ENCODE measurements at regions of chr17 and their contacts with region 1.

Region 1: DNA sequence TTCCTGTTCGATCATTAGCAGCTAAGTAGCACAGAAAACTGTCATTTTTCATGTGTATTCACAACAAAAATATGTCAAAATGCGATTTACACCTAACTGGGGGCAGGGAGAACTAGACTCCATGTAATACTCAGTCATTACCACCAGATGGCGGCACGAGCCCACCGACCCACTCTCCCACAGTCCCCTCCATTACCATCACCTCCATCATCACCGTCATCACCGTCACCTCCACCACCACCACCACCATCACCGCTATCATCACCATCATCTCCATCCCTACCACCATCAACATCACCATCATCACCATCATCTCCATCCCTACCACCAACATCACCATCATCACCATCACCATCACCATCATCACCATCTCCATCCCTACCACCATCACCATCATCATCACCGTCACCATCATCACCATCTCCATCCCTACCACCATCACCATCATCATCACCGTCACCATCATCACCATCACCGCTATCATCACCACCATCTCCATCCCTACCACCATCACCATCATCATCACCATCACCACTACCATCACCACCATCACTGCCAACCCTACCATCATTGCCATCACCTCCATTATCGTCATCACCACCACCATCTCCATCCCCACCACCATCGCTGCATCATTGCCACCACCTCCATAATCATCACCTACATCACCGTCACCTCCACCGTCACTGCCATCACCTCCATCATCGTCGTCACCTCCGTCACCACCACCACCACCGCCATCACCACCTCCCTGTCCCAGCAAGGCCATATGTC is 14.4 kb downstream of the NDUFAF8 start:
- DNase-seq: peak; percentile 66 to 77 (median 72)
- ATAC-seq: peak; percentile 83
- H3K4me3 ChIP-seq: no peak overlapping the region
- H3K27ac ChIP-seq: no peak overlapping the region
- H3K4me1 ChIP-seq: peaks cover 0 to 44% of the 10 kb centered on the region in 2 experiments; a peak in 1 of 5 replicates
- H3K27me3 ChIP-seq: no peaks in the 10 kb centered on the region
- CTCF ChIP-seq: peak; percentile 82 to 90 (median 86)
- EP300 ChIP-seq: no peak
- POLR2A ChIP-seq: 0 out of 2 replicates have a peak, but pooled peaks have one; percentile 26
- RAD21 ChIP-seq: peak; percentile 82 to 89

Region 2: DNA sequence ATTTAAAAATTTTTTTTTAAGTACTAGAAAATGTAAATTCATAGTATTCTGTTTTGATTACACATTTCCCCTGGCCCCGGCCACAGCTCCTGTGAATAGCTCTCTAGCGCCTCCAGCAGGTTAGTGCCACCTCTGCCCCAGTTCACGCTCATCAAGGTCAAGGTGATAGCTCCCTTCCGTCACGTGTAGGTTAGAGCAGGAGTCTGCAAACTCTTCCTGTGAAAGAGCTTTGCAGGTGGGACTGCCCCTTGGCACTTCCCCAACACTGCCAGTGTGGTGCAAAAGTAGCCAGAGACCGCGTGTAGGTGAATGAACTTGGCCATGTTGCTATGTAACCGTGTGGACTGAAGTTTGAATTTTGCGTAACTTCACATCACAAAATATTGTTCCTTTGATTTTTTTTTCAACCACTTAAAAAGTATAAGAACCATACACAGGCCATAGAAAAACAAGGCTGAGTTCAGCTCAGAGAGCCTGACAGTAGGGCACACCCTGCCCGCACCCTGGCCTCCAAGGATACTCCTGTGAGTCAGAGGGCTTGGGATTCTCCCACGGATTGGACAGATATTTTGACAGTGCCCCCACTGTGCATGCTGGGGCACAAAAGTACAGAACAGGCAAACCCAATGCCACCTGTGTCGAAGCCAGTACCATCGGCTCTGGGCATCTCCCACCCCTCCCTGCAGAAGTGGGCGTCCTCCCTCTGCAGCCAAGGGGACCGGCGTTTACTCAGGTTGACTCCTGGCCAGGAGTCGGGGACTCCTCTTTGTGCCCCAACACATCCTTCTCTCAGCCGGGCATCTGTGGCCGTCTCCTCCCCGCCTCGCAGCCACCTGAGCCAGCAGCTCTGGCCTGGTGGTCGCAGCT is 353.9 kb before region 1 on chr17:
- CTCF ChIA-PET with region 1: no interaction called
- POLR2A ChIA-PET with region 1: no interaction called
- in situ Hi-C with region 1: no loop called
- intact Hi-C with region 1: no loop called
- DNase-seq: peak; percentile 74 to 86 (median 81)
- ATAC-seq: peak; percentile 96
- H3K4me3 ChIP-seq: no peak overlapping the region
- H3K27ac ChIP-seq: no peak overlapping the region
- H3K4me1 ChIP-seq: peaks cover 0 to 10% of the 10 kb centered on the region in 2 experiments; a peak in 1 of 5 replicates
- H3K27me3 ChIP-seq: no peaks in the 10 kb centered on the region
- CTCF ChIP-seq: peak; percentile 81 to 93 (median 92)
- EP300 ChIP-seq: no peak
- POLR2A ChIP-seq: no peak
- RAD21 ChIP-seq: peak; percentile 69 to 86

Region 3: GRCh38 chr17:81294856-81295680 is 41.5 kb after region 1 on chr17 and contains the start of gene SLC38A10:
- CTCF ChIA-PET with region 1: no interaction called
- POLR2A ChIA-PET with region 1: interaction called, 3 read pairs
- in situ Hi-C with region 1: no loop called
- intact Hi-C with region 1: loop called (anchors 5 kb)
- DNase-seq: peak; percentile 95 to 98 (median 96)
- ATAC-seq: peak; percentile 93
- H3K4me3 ChIP-seq: peak within 1 kb of the TSS; percentile 86
- H3K27ac ChIP-seq: peak within 1 kb of the TSS; percentile 90
- H3K4me1 ChIP-seq: peaks cover 18 to 40% of the 10 kb centered on the region in 2 experiments; a peak in 4 of 5 replicates
- H3K27me3 ChIP-seq: no peaks in the 10 kb centered on the region
- CTCF ChIP-seq: 0 out of 6 replicates have a peak, but pooled peaks of 1 of the 3 experiments have one; percentile 6
- EP300 ChIP-seq: 0 out of 2 replicates have a peak, but pooled peaks have one; percentile 14
- POLR2A ChIP-seq: peak; percentile 94
- RAD21 ChIP-seq: no peak
- polyA plus RNA-seq, gene SLC38A10: 0.45 to 0.92 TPM

Region 4: GRCh38 chr17:81537343-81537855 is 283.9 kb after region 1 on chr17:
- CTCF ChIA-PET with region 1: interaction called, 11 read pairs
- POLR2A ChIA-PET with region 1: interaction called, 3 read pairs
- in situ Hi-C with region 1: no loop called
- intact Hi-C with region 1: no loop called
- DNase-seq: peak in 2 of 4 experiments; percentile 54 to 59
- ATAC-seq: peak; percentile 67
- H3K4me3 ChIP-seq: no peak overlapping the region
- H3K27ac ChIP-seq: no peak overlapping the region
- H3K4me1 ChIP-seq: peaks cover 0 to 63% of the 10 kb centered on the region in 2 experiments; a peak in 2 of 5 replicates
- H3K27me3 ChIP-seq: no peaks in the 10 kb centered on the region
- CTCF ChIP-seq: peak; percentile 55 to 60 (median 58)
- EP300 ChIP-seq: no peak
- POLR2A ChIP-seq: peak; percentile 44; the same call in 1 of the 2 replicates
- RAD21 ChIP-seq: peak in 1 of 2 experiments; percentile 40; a peak in 1 of 4 replicates

Region 5: DNA sequence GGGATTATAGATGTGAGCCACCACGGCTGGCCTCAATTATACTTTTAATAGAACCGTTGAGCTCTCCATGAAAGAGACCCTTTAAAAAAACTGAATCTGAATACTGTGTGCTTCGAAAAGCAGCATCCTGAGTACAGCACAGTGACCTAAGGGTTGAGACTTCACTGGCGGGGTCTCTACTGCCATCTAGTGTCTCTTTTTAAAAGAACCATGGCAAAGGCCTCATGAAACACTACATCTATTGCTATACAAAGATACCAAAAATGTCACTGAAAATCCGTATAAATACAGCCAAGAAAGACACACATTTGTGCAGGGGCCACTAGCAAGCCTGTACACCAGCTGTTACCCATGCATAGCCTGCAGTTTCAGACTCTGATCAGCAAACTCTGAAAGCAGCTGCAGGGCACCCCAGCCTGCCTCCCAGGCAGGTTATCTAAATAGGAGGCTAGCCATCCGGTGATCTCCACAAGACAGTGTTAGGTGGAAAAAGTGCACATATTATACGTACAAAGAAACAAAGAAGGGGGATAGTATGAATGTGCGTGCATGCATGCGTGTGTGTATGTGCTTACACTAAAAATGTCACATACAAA is 348.1 kb after region 1 on chr17:
- CTCF ChIA-PET with region 1: interaction called, 10 read pairs
- POLR2A ChIA-PET with region 1: no interaction called
- in situ Hi-C with region 1: no loop called
- intact Hi-C with region 1: no loop called
- DNase-seq: peak; percentile 56 to 67 (median 61)
- ATAC-seq: peak; percentile 98
- H3K4me3 ChIP-seq: no peak overlapping the region
- H3K27ac ChIP-seq: no peak overlapping the region
- H3K4me1 ChIP-seq: no peaks in the 10 kb centered on the region
- H3K27me3 ChIP-seq: no peaks in the 10 kb centered on the region
- CTCF ChIP-seq: peak; percentile 50 to 80 (median 77); a peak in 5 of 6 replicates
- EP300 ChIP-seq: no peak
- POLR2A ChIP-seq: no peak; the same call in 1 of the 2 replicates
- RAD21 ChIP-seq: peak in 1 of 2 experiments; percentile 46; a peak in 3 of 4 replicates

Measured in K562 (cell line).